Activated CD4-positive, alpha-beta memory T cell treated with anti-CD3 and anti-CD28 coated beads, Interleukin-2, amount 10 ng/mL, durations not matched to agents 7 days and 5 days (primary cell): ENCODE measurements at regions of chr6 and their contacts with region 1.

Region 1: DNA sequence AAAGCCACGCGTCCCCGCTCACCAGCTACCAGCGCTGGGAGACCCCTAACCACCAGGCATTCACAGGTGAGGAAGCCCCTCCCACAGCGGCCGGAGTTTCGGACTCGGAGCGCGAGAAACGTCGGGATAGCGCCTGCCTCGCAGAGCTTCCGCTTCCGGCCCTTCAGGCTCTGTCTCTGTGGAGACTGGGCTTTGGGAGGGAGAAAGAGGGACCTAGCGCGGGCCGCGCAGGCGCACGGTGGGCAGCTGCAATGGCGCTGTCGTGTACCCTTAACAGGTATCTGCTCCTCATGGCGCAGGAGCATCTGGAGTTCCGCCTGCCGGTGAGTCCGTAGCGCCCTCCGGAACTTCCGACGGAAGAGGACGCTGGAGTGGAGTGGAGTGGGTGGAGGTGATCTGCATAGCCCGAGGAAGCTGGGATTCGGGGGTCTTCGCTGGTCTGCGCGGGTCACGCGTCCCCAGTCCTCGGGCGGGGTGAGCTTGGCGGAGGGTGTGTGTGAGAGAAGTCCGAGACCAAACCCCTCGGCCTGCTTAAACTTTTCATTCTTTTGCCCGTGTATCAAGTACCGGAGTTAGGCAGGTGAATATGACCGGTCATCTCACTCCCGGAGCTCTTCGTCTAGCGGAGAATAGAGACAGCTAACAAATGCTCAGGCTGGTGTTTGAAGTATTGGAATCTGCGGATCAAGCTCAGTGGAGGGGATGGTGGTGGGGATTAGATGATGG is at the start of gene TRMT11:
- DNase-seq: peak; percentile 79
- H3K4me3 Mint-ChIP-seq: peak within 1 kb of the TSS; percentile 3
- H3K27ac Mint-ChIP-seq: no peak within 1 kb of the TSS
- H3K4me1 Mint-ChIP-seq: peaks cover 14% of the 10 kb centered on the region
- H3K27me3 Mint-ChIP-seq: no peaks in the 10 kb centered on the region
- total RNA-seq, gene TRMT11: 17.6 to 19.2 TPM

Region 2: DNA sequence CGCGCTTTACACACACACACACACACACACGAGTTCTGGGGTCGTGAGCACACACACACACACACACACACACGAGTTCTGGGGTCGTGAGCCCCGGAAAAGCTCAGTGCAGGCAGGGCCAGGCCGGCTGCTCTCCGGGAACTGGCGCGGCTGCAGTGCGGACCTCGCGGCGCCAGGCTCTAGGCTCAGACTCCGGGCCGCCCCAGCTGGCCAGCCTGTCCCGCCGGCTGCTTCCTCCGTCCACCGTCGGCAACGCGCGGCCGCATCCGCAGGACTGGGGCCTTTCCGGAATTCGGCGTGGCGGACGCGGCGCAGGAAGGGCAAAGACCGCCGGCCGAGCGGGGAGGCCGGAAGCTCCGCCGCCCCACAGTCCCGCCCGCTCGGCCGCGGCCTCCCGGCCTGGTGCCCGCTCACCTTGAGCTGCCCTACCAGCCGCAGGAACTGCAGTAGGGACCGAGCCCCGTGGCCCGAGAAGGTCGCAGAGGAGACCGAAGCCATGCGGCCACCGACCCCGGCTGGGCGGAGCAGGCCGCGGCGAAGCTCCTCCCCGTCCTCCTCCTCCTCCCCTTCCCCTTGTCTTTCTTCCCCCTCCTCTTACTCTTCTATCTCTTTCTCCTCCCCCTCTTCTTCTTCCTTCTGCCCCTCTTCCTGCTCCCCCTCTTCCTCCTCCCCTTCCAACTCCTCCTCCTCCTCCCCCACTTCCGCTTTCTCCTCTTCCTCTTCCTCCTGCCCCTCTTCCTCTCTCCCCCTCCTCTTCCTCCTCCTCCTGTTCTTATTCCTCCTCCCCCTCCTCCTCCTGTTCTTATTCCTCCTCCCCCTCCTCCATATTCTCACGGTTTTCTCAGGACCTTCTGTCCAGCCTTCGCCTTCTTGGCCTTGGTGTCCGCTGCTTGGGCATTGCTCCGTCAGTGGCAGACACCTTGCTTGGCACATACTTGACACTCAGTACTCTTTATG is 684.8 kb before region 1 on chr6 and contains the start of gene HDDC2:
- CTCF ChIA-PET with region 1: no interaction called
- POLR2A ChIA-PET with region 1: interaction called, 13 read pairs
- DNase-seq: peak; percentile 60
- H3K4me3 Mint-ChIP-seq: peak within 1 kb of the TSS; percentile 81
- H3K27ac Mint-ChIP-seq: peak within 1 kb of the TSS; percentile 84
- H3K4me1 Mint-ChIP-seq: peaks cover 41% of the 10 kb centered on the region
- H3K27me3 Mint-ChIP-seq: peaks cover 20% of the 10 kb centered on the region
- total RNA-seq, gene HDDC2: 47.3 to 50.0 TPM

Region 3: DNA sequence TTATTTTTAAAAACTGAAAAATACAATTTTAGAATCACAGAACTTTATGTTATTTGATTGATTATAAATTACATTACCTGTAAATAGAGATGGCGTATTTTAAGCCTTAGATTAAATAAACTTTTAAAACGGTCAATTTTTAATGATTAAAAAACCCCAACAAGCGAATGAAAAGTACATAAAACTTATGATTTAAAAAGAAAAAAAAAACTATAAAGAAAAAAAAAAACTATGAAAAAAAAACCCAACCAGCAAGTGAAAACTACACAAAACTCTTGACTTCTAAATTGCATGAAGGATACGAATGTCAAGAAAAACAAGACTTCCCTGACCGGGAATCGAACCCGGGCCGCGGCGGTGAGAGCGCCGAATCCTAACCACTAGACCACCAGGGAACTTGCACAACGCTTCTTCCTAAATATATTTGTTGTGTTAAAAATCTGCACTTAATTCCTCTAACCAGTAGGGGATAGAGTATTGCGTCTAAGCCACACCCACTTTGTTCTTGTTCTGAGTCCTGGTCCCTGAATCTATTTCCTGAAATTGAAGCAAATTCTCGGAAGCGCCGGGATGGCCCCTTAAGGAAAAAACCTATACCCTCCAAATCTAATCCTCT is 206.4 kb before region 1 on chr6:
- CTCF ChIA-PET with region 1: interaction called, 4 read pairs
- POLR2A ChIA-PET with region 1: interaction called, 21 read pairs
- DNase-seq: peak; percentile 86
- H3K4me3 Mint-ChIP-seq: no peak overlapping the region
- H3K27ac Mint-ChIP-seq: no peak overlapping the region
- H3K4me1 Mint-ChIP-seq: peaks cover 13% of the 10 kb centered on the region
- H3K27me3 Mint-ChIP-seq: peaks cover 18% of the 10 kb centered on the region

Region 4: GRCh38 chr6:125834348-125834747 is 152.1 kb before region 1 on chr6:
- CTCF ChIA-PET with region 1: no interaction called
- POLR2A ChIA-PET with region 1: no interaction called
- DNase-seq: no peak
- H3K4me3 Mint-ChIP-seq: no peak overlapping the region
- H3K27ac Mint-ChIP-seq: peak overlapping the region; percentile 11
- H3K4me1 Mint-ChIP-seq: peaks cover 53% of the 10 kb centered on the region
- H3K27me3 Mint-ChIP-seq: no peaks in the 10 kb centered on the region

Region 5: GRCh38 chr6:126002755-126003679 is 16.6 kb after region 1 on chr6:
- CTCF ChIA-PET with region 1: interaction called, 46 read pairs
- POLR2A ChIA-PET with region 1: interaction called, 10 read pairs
- DNase-seq: no peak
- H3K4me3 Mint-ChIP-seq: peak overlapping the region; percentile 22
- H3K27ac Mint-ChIP-seq: peak overlapping the region; percentile 40
- H3K4me1 Mint-ChIP-seq: peaks cover 19% of the 10 kb centered on the region
- H3K27me3 Mint-ChIP-seq: no peaks in the 10 kb centered on the region